ENCODE measurements at regions of chr10 and their contacts with region 1.

Region 1: GRCh38 chr10:88386821-88387773 is 196.0 kb downstream of the RNLS start:
- DNase-seq: peak; percentile 88
- H3K4me3 ChIP-seq: peak overlapping the region in 1 of 3 experiments; percentile 12
- H3K27ac ChIP-seq: no peak overlapping the region
- H3K4me1 ChIP-seq: peaks cover 6% of the 10 kb centered on the region
- H3K27me3 ChIP-seq: no peaks in the 10 kb centered on the region
- CTCF ChIP-seq: no peak
- POLR2A ChIP-seq: no peak

Region 2: GRCh38 chr10:87771871-87772500 is 615.1 kb before region 1 on chr10:
- CTCF ChIA-PET with region 1: interaction called, 12 read pairs
- POLR2A ChIA-PET with region 1: no interaction called
- dilution Hi-C with region 1: no loop called
- intact Hi-C with region 1: loop called (anchors 2 kb)
- DNase-seq: peak; percentile 57
- H3K4me3 ChIP-seq: no peak overlapping the region
- H3K27ac ChIP-seq: no peak overlapping the region
- H3K4me1 ChIP-seq: peaks cover 17% of the 10 kb centered on the region
- H3K27me3 ChIP-seq: no peaks in the 10 kb centered on the region
- CTCF ChIP-seq: peak; percentile 21 to 35
- POLR2A ChIP-seq: no peak

Region 3: DNA sequence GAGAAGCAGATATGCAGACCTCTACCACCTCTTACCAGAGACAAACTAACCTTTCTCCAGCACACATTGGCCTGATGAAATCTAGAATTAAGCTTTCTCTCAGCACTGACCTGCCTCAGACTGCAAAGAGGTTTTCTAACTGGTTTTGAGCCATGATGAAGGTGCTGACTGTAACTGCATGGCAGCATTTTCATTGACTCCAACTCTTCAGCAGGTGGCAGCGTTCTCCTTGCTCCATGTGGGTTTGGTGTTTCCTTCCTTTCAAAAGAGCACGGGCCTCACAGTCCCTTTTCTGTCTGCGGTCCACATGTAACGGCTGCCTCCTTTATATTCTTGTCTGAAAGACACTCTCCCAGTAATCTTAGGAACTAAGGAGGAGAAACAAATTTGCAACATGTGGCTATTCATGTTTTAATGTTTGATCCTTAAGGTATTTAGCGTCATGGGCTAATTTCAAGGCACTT is 536.3 kb before region 1 on chr10:
- CTCF ChIA-PET with region 1: interaction called, 103 read pairs
- POLR2A ChIA-PET with region 1: no interaction called
- dilution Hi-C with region 1: no loop called
- intact Hi-C with region 1: loop called (anchors 1 kb)
- DNase-seq: peak; percentile 54
- H3K4me3 ChIP-seq: no peak overlapping the region
- H3K27ac ChIP-seq: no peak overlapping the region
- H3K4me1 ChIP-seq: no peaks in the 10 kb centered on the region
- H3K27me3 ChIP-seq: no peaks in the 10 kb centered on the region
- CTCF ChIP-seq: peak; percentile 46 to 65
- POLR2A ChIP-seq: no peak

Region 4: DNA sequence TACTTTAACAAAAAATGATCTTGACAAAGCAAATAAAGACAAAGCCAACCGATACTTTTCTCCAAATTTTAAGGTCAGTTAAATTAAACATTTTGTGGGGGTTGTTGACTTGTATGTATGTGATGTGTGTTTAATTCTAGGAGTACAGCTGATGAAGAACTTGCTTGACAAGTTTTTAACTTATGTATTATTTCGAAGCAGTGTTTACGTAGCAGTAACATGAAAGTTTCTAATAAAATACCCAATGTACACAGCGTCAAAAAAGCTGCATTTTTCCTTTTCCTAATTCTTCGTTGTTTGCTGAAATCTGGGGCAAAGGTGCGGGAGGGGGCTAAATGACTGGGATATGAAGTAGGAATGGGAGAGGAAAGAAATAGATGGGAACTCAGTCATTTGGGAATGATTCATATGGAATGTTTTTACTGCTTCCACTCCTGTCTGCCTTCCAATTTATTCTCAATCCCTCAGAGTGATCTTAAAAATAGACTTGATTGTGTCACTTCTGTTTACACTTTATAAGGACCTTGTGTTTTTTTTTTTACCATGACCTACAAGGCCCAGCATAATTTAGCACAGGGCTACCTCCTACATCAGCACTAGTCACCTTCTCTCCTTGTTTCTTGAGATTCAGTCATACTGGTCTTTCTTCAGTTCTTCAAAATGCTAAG is 425.9 kb before region 1 on chr10:
- CTCF ChIA-PET with region 1: interaction called, 11 read pairs
- POLR2A ChIA-PET with region 1: no interaction called
- dilution Hi-C with region 1: no loop called
- intact Hi-C with region 1: loop called (anchors 10 kb)
- DNase-seq: peak; percentile 84
- H3K4me3 ChIP-seq: no peak overlapping the region
- H3K27ac ChIP-seq: peak overlapping the region; percentile 58
- H3K4me1 ChIP-seq: peaks cover 26% of the 10 kb centered on the region
- H3K27me3 ChIP-seq: no peaks in the 10 kb centered on the region
- CTCF ChIP-seq: no peak
- POLR2A ChIP-seq: no peak

Region 5: GRCh38 chr10:88120599-88121333 is 266.3 kb before region 1 on chr10:
- CTCF ChIA-PET with region 1: interaction called, 42 read pairs
- POLR2A ChIA-PET with region 1: no interaction called
- dilution Hi-C with region 1: no loop called
- intact Hi-C with region 1: loop called (anchors 1 kb)
- DNase-seq: no peak
- H3K4me3 ChIP-seq: no peak overlapping the region
- H3K27ac ChIP-seq: no peak overlapping the region
- H3K4me1 ChIP-seq: no peaks in the 10 kb centered on the region
- H3K27me3 ChIP-seq: no peaks in the 10 kb centered on the region
- CTCF ChIP-seq: no peak
- POLR2A ChIP-seq: no peak

Region 6: GRCh38 chr10:88553116-88553752 is 166.1 kb after region 1 on chr10:
- CTCF ChIA-PET with region 1: interaction called, 26 read pairs
- POLR2A ChIA-PET with region 1: no interaction called
- dilution Hi-C with region 1: no loop called
- intact Hi-C with region 1: loop called (anchors 1 kb)
- DNase-seq: peak; percentile 76
- H3K4me3 ChIP-seq: no peak overlapping the region
- H3K27ac ChIP-seq: no peak overlapping the region
- H3K4me1 ChIP-seq: no peaks in the 10 kb centered on the region
- H3K27me3 ChIP-seq: no peaks in the 10 kb centered on the region
- CTCF ChIP-seq: peak; percentile 63 to 64
- POLR2A ChIP-seq: no peak

Region 7: DNA sequence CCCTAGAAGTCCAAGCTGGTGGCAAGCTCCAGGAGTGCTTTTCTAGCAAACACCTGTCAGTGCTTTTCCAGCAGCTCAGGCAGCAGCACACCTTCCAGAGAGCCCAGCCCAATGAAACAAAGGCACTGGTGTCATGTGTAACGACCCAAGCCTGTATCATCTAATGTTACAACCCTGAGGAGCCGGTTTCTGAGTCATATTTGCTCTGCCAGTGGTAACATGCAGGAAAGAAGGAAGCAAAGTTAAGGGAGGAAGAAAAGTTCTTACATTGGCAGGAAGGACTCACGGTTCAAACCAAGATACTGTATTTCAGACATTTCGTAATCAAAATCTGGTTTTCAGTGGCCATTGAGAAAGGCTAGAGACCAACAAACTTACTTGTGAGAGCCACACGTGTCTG is 464.6 kb after region 1 on chr10 and contains the start of gene ANKRD22:
- CTCF ChIA-PET with region 1: no interaction called
- POLR2A ChIA-PET with region 1: no interaction called
- dilution Hi-C with region 1: no loop called
- intact Hi-C with region 1: no loop called
- DNase-seq: no peak
- H3K4me3 ChIP-seq: no peak within 1 kb of the TSS
- H3K27ac ChIP-seq: no peak within 1 kb of the TSS
- H3K4me1 ChIP-seq: peaks cover 7% of the 10 kb centered on the region
- H3K27me3 ChIP-seq: peaks cover 0 to 7% of the 10 kb centered on the region in 2 experiments
- CTCF ChIP-seq: no peak
- POLR2A ChIP-seq: no peak
- total RNA-seq, gene ANKRD22: not detected in 2 replicates

Measured in endothelial cell of umbilical vein (primary cell).